Activated T-helper 1 cell treated with anti-CD3 and anti-CD28 coated beads, Interleukin-12 subunit alpha, Interleukin-12 subunit beta, Interleukin-2, Interleukin-4 antibody, amounts not matched to agents 30 ng/mL and 10 ng/mL and 1 ng/mL, durations not matched to agents 14 hours and 24 hours and 36 hours (primary cell): ENCODE measurements at regions of chr6 and their contacts with region 1.

Region 1: DNA sequence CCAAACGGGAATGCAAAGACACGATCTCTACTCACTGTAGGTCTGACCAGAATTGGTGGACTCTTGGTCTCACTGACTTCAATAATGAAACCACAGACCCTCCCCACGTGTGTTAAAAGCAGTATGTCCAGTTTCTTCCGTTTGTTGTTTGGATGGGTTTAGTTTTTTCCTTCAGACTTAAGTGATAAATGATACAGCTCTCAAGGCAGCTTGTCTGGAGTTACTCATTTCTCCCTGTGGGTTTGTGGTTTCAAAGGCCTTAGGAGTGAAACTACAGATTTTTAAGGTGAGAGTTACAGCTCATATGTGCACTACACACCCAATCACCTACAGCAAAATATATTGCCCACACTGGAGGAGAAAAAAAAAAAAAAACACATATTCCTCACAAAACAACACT is 86.7 kb upstream of the STMND1 start:
- DNase-seq: peak; percentile 14
- H3K4me3 Mint-ChIP-seq: peak overlapping the region; percentile 16
- H3K27ac Mint-ChIP-seq: no peak overlapping the region
- H3K4me1 Mint-ChIP-seq: peaks cover 17% of the 10 kb centered on the region
- H3K27me3 Mint-ChIP-seq: peaks cover 50% of the 10 kb centered on the region

Region 2: DNA sequence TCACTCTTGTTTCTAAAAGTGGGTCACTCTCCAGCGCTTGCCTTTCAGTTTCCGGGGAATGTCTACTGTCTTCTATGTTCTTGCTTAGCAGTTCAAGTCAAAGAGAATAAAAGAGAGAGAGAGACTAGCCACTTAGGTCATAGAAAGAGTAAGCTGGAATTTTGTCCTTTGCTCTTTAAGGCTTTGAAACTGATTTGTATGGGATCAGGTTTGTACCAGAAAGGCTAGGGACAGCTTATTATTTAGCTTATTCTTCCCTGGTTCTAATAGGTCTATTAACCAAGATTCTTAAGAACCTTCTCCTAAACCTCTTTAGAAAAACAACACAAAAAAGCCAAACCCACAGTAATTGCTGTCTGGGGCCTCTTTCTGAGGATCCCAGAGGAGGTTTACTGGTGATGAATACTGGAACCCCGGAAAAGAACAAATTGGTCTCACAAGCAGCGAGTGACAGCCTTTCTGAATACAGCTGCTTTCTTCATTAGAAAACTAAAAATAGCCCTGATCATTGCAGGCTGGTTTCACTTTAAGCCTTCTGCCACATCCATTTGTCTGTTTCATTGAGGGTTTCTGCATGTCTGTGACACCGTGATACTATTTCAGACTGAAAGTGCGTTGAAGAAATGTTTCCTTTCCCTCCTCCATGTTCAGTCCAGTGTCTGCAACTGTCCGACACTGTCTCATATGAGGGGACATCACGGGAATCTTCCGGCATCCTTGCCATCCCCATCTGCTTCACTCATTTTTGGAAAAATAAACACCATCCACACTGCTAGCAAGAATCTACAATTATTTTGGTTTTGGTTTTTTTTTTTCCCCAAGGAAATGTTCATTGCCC is 178.8 kb before region 1 on chr6:
- intact Hi-C with region 1: loop called (anchors 5 kb)
- DNase-seq: no peak
- H3K4me3 Mint-ChIP-seq: peak overlapping the region; percentile 59
- H3K27ac Mint-ChIP-seq: peak overlapping the region; percentile 73
- H3K4me1 Mint-ChIP-seq: peaks cover 25% of the 10 kb centered on the region
- H3K27me3 Mint-ChIP-seq: peaks cover 8% of the 10 kb centered on the region

Region 3: DNA sequence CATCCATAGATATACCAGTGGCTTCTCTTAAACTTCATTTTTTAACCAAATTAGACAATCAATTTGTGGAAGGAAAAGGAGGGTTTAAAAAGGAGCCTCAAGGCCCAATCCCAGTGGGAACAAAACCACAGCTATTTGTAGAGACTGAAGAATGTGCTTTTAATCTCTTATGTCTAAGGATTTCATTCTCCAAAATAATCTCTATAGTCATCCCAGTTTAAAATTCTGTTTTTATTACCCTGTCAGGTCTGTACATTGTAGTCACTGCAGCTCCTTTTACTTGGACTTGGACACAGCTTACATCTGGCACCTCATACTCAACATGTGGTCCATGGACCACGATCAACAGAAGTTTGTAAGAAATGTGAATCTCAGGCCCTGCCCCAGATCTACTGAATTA is 65.4 kb before region 1 on chr6:
- intact Hi-C with region 1: loop called (anchors 1 kb)
- DNase-seq: no peak
- H3K4me3 Mint-ChIP-seq: no peak overlapping the region
- H3K27ac Mint-ChIP-seq: no peak overlapping the region
- H3K4me1 Mint-ChIP-seq: peaks cover 25% of the 10 kb centered on the region
- H3K27me3 Mint-ChIP-seq: peaks cover 16% of the 10 kb centered on the region

Region 4: DNA sequence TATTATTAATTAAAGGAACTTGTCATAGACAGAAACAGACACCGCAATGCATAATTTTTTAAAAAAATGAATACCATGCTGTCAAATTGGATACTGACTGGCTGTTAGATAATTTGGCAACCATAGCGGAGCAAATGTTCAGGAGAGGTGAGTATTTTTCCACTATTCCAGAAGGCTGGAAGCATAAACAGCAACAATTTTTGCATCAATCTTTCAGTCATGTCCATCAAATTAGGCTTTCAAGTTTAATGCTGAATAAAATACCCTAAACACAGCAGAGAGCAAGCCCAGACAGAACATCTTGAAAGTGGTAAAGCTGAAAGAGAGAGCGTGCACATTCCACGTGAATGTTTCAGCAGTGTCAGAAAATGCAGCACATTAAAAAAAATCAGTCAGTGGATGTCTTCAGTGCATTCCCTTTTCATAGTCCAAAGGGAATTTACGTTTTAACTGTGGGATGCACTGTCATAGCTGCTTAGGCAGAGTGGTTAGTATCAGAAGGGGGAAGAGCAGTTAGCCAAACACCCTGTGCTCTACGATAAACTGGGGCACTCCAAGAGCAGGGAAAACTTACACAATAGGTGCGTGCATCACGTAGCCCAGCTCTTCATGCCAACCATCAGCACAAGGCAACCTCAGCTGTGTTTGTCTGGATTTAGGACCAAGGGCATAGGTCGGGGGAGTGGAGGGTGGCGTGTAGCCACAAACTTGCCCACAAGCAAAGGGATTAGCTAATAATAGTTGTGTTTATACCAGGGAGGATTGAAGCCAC is 29.4 kb before region 1 on chr6:
- intact Hi-C with region 1: no loop called
- DNase-seq: no peak
- H3K4me3 Mint-ChIP-seq: no peak overlapping the region
- H3K27ac Mint-ChIP-seq: no peak overlapping the region
- H3K4me1 Mint-ChIP-seq: no peaks in the 10 kb centered on the region
- H3K27me3 Mint-ChIP-seq: peaks cover 22% of the 10 kb centered on the region

Region 5: GRCh38 chr6:16999491-17000436 is 15.4 kb before region 1 on chr6:
- intact Hi-C with region 1: no loop called
- DNase-seq: no peak
- H3K4me3 Mint-ChIP-seq: no peak overlapping the region
- H3K27ac Mint-ChIP-seq: no peak overlapping the region
- H3K4me1 Mint-ChIP-seq: no peaks in the 10 kb centered on the region
- H3K27me3 Mint-ChIP-seq: peaks cover 22% of the 10 kb centered on the region